ENCODE measurements at regions of chr12 and their contacts with region 1.

Region 1: DNA sequence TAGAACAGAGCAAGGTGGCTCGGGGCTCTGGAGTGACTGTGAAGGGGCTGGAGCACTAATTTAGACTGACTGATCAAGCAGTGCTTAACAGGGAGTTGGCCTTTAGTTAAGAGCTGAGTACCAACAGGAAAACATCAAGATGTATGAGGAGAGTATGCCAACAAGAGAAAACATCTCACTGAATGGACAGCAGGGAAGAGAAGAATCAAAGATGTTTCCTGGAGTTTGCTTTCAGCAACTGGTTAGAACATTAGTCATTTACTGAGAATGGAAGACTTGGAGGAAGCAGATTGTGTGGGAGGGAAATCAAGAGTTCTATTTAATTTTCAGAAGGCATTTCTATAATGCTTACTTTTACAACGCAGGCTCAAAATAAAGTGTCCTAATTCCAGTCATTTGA is 259.3 kb downstream of the ADAMTS20 start:
- DNase-seq: no peak
- ATAC-seq: no peak

Region 2: GRCh38 chr12:43273467-43273866 is 19.2 kb before region 1 on chr12:
- intact Hi-C with region 1: loop called (anchors 2 kb)
- DNase-seq: no peak
- ATAC-seq: no peak

Region 3: DNA sequence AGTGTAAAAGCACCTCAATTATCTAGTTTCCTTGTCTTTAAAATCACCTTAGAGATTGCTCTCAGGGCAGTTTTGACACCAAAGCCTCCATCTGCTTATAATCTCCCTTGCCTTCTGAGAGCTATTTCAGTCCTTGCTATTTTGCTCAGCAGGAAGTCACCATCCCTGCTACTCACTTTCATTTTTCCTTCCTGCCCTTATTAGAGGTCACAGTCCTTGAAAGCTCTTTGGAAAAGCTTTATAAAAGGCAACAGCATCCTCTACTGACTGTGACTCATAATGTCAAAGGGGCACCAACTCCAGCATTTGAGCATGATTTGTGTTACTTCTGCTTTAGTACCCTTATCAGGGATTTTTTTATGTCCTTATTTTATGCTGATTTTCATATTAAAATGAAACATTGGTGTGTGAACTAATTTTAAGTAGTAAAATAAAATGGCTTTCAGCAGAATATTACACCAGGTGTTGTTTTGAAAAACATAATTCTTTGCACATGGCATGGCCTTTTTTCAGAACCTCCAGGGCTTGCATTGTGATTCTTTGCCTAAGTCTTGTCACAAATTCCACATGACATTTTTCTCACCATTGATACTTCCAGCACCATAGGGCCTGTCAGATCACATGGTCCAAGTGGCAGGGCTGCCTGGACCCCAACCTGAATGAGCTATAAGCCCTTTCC is 46.3 kb after region 1 on chr12:
- intact Hi-C with region 1: no loop called
- DNase-seq: no peak
- ATAC-seq: peak; percentile 92